Naive thymus-derived CD4-positive, alpha-beta T cell (primary cell): ENCODE measurements at regions of chr21 and their contacts with region 1.

Region 1: DNA sequence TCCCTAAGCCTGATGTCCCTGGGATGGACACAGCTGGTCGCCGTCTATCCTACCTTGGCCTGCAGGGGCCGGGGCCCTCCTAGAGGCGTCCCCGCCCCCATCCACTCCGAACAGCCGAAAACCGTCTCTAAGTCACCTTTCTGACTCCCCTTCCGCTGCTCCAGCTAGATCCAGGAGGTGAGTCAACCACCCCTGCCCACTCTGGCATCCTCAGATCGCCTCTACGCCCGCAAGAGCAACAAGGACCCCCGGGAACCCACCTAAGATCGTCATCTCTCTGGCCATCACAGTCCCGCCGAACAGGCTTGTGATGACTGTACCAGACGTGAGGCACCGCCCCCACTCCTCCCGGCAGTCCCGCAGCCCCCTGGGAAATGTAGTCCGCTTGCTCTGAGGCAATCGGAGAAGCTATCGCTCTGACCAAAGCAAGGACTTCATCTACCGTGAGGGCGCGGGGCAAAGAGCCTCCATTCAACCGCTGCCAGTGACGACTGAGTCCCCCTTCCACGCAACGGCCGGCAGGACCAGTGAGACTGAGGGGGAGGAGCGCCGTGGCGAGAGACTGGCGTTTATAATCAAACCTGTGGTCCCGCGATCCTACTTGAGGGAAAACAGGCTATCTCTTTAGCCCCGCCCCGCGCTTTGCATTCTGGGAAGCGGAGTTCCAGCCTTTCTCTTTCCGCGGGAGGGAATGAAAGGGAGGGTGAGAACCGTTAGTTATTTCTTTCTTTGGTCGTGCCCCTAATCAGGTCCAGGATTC is at the start of gene HSPA13:
- DNase-seq: peak; percentile 88 to 99 (median 99)
- ATAC-seq: peak; percentile 97
- H3K4me3 ChIP-seq: peak within 1 kb of the TSS; percentile 93
- H3K4me3 Mint-ChIP-seq: peak within 1 kb of the TSS; percentile 93 to 100 (median 100)
- H3K27ac ChIP-seq: peak within 1 kb of the TSS; percentile 91
- H3K27ac Mint-ChIP-seq: peak within 1 kb of the TSS; percentile 93 to 100 (median 98)
- H3K4me1 ChIP-seq: peaks cover 8 to 25% of the 10 kb centered on the region in 2 donors
- H3K4me1 Mint-ChIP-seq: peaks cover 13 to 44% (median 41%) of the 10 kb centered on the region in 7 donors
- H3K27me3 ChIP-seq: no peaks in the 10 kb centered on the region
- H3K27me3 Mint-ChIP-seq: peaks cover 0 to 2% (median 0%) of the 10 kb centered on the region in 5 donors
- total RNA-seq, gene HSPA13: 16.9 to 38.1 (median 26.7) TPM

Region 2: GRCh38 chr21:14259747-14260146 is 123.3 kb before region 1 on chr21:
- CTCF ChIA-PET with region 1: no interaction called
- POLR2A ChIA-PET with region 1: no interaction called
- intact Hi-C with region 1: loop called (anchors 5 to 10 kb)
- DNase-seq: peak in 5 of 9 donors; percentile 13 to 28 (median 23)
- ATAC-seq: peak; percentile 59
- H3K4me3 ChIP-seq: no peak overlapping the region
- H3K4me3 Mint-ChIP-seq: no peak overlapping the region
- H3K27ac ChIP-seq: no peak overlapping the region
- H3K27ac Mint-ChIP-seq: no peak overlapping the region
- H3K4me1 ChIP-seq: no peaks in the 10 kb centered on the region
- H3K4me1 Mint-ChIP-seq: no peaks in the 10 kb centered on the region
- H3K27me3 ChIP-seq: no peaks in the 10 kb centered on the region
- H3K27me3 Mint-ChIP-seq: peaks cover 2 to 19% (median 12%) of the 10 kb centered on the region in 5 donors

Region 3: GRCh38 chr21:14581902-14582457 is 199.0 kb after region 1 on chr21:
- CTCF ChIA-PET with region 1: no interaction called
- POLR2A ChIA-PET with region 1: no interaction called
- intact Hi-C with region 1: no loop called
- DNase-seq: peak in 2 of 9 donors; percentile 4 to 21
- ATAC-seq: peak; percentile 64
- H3K4me3 ChIP-seq: no peak overlapping the region
- H3K4me3 Mint-ChIP-seq: peak overlapping the region; percentile 0 to 72 (median 25)
- H3K27ac ChIP-seq: no peak overlapping the region
- H3K27ac Mint-ChIP-seq: peak overlapping the region in 2 of 9 donors; percentile 5 to 74
- H3K4me1 ChIP-seq: no peaks in the 10 kb centered on the region
- H3K4me1 Mint-ChIP-seq: peaks cover 0 to 31% (median 5%) of the 10 kb centered on the region in 7 donors
- H3K27me3 ChIP-seq: no peaks in the 10 kb centered on the region
- H3K27me3 Mint-ChIP-seq: no peaks in the 10 kb centered on the region

Region 4: DNA sequence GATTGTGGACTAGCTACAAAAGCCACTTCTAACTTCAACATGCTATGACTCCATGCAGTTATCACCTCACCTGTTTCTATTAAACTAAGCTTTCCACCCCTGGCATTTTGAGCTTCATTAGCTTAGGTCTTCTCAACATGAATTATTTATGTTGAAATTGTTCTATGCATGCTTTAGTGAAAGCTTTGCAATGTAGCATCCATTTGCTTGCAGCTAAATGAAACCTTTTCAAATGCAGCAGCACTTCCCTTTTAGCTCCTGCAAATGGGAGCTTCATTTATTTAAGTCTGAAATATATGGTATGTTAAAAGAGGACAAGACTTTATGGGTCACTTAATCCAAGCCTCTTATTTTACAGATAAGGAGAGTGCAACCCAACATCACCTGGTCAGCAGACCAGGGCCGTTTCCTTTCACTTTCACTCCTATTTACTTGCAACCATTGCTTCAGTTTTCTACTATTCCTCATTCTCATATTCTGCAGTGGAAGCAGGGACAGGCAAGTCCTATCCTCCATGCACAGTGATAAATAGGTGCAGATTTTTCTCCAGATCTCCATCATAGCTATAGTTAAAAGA is 219.5 kb after region 1 on chr21:
- CTCF ChIA-PET with region 1: no interaction called
- POLR2A ChIA-PET with region 1: no interaction called
- intact Hi-C with region 1: loop called in 1 of 2 experiments (anchors 5 kb)
- DNase-seq: no peak
- ATAC-seq: no peak
- H3K4me3 ChIP-seq: peak overlapping the region; percentile 46
- H3K4me3 Mint-ChIP-seq: peak overlapping the region; percentile 11 to 82 (median 62)
- H3K27ac ChIP-seq: no peak overlapping the region
- H3K27ac Mint-ChIP-seq: peak overlapping the region in 7 of 9 donors; percentile 3 to 80 (median 58)
- H3K4me1 ChIP-seq: peaks cover 10 to 11% of the 10 kb centered on the region in 2 donors
- H3K4me1 Mint-ChIP-seq: peaks cover 14 to 48% (median 27%) of the 10 kb centered on the region in 7 donors
- H3K27me3 ChIP-seq: no peaks in the 10 kb centered on the region
- H3K27me3 Mint-ChIP-seq: no peaks in the 10 kb centered on the region

Region 5: DNA sequence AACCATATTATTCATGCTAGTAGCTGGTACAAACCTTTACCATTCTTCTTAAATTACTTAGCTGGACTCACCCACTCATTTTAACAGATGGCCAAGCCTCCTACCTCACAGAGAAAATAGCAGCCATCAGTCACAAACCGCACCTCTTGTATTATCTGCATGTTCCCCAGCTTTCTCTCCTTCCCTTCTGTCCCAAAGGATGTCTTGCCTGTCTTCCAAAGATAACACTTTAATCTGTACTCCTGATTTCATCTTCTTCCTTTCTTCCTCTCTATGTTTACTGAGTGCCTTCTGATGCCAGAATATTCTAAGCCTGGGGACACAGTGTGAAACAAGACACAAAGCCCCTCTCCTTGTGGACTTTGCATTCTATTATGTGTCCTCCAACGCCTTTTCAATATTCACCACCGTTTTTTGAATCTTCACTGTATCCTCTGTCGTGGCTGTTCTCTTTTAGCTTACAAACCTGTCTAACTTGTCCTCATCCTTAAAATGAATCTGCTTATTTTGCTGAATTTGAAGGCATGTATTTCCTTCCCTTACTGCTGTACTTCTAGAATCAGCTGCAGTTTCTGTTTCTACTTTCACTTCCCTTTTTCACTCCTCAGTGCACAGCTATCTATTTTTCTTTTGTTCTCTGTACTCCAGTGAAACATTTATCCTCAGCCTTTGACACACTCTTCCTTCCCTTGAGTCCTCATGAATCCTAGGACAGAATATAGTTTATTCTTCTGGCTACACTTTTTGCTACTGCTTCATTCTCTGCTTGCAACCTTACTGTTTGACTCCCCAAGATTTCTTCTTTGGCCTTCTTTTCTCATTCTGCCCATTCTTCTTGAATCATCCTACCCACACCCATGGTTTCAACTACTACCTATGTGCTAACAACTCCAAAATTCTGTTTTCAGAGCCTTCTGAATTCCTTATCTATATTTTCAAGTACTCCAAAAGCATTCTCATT is 380.0 kb after region 1 on chr21:
- CTCF ChIA-PET with region 1: no interaction called
- POLR2A ChIA-PET with region 1: no interaction called
- intact Hi-C with region 1: loop called in 1 of 2 experiments (anchors 1 kb)
- DNase-seq: peak in 3 of 9 donors; percentile 11 to 20 (median 15)
- ATAC-seq: peak; percentile 84
- H3K4me3 ChIP-seq: peak overlapping the region; percentile 21
- H3K4me3 Mint-ChIP-seq: no peak overlapping the region
- H3K27ac ChIP-seq: peak overlapping the region; percentile 26
- H3K27ac Mint-ChIP-seq: no peak overlapping the region
- H3K4me1 ChIP-seq: peaks cover 0 to 10% of the 10 kb centered on the region in 2 donors
- H3K4me1 Mint-ChIP-seq: peaks cover 0 to 8% (median 6%) of the 10 kb centered on the region in 7 donors
- H3K27me3 ChIP-seq: no peaks in the 10 kb centered on the region
- H3K27me3 Mint-ChIP-seq: no peaks in the 10 kb centered on the region

Region 6: GRCh38 chr21:15514073-15514946 is 1131.3 kb after region 1 on chr21:
- CTCF ChIA-PET with region 1: no interaction called
- POLR2A ChIA-PET with region 1: no interaction called
- intact Hi-C with region 1: loop called (anchors 1 kb)
- DNase-seq: peak in 8 of 9 donors; percentile 34 to 87 (median 82)
- ATAC-seq: peak; percentile 99
- H3K4me3 ChIP-seq: peak overlapping the region; percentile 23
- H3K4me3 Mint-ChIP-seq: peak overlapping the region; percentile 59 to 76 (median 69)
- H3K27ac ChIP-seq: peak overlapping the region; percentile 46
- H3K27ac Mint-ChIP-seq: peak overlapping the region; percentile 75 to 94 (median 87)
- H3K4me1 ChIP-seq: peaks cover 12 to 32% of the 10 kb centered on the region in 2 donors
- H3K4me1 Mint-ChIP-seq: peaks cover 16 to 54% (median 31%) of the 10 kb centered on the region in 7 donors
- H3K27me3 ChIP-seq: no peaks in the 10 kb centered on the region
- H3K27me3 Mint-ChIP-seq: no peaks in the 10 kb centered on the region